ENCODE measurements at regions of chr18 and their contacts with region 1.

Region 1: GRCh38 chr18:51621113-51621863 is 423.8 kb upstream of the MEX3C start:
- DNase-seq: peak; percentile 53
- H3K4me3 ChIP-seq: no peak overlapping the region; a peak in 1 of 4 replicates
- H3K27ac ChIP-seq: no peak overlapping the region
- H3K4me1 ChIP-seq: peaks cover 3 to 8% of the 10 kb centered on the region in 2 experiments; a peak in 2 of 4 replicates
- H3K27me3 ChIP-seq: no peaks in the 10 kb centered on the region
- CTCF ChIP-seq: peak; percentile 84
- EP300 ChIP-seq: no peak
- RAD21 ChIP-seq: peak; percentile 95

Region 2: DNA sequence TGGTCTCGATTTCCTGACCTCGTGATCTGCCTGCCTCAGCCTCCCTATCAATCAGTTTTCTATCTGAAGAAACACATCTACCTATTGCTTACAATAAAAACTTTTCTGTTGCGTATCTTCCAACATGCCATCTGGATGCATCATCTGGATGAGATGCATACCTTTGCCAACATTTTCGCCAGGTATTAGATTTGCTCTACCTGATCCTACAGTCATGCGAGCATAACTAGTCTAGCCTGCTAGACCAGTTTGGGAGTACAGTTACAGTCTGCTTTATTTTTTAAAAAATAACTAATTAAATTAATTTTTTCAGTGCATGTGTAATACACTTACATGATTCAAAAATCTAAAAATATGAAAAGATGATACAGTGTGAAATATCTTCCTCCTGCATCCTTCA is 89.8 kb before region 1 on chr18:
- CTCF ChIA-PET with region 1: no interaction called
- POLR2A ChIA-PET with region 1: no interaction called
- DNase-seq: no peak
- H3K4me3 ChIP-seq: no peak overlapping the region
- H3K27ac ChIP-seq: no peak overlapping the region
- H3K4me1 ChIP-seq: no peaks in the 10 kb centered on the region
- H3K27me3 ChIP-seq: no peaks in the 10 kb centered on the region
- CTCF ChIP-seq: no peak
- EP300 ChIP-seq: no peak
- RAD21 ChIP-seq: no peak

Region 3: DNA sequence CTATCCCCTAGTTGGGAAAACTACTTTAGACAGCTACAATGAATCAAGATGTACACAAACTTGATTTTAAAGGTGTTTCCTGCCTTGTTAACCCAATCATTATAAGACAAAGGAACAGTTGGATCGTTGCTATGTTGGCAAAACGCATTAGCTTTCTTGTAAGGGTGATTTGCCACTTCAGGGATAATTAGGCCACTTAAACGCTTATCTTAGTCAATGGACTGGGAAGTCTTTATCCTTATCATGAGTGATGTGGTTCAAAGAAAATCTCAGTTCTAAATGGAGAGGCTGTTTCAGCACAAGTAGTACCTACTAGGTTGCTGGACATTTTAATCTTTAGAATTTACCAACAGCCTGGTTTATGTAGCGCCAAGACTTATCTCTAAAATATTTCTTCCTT is 17.7 kb before region 1 on chr18:
- CTCF ChIA-PET with region 1: interaction called, 13 read pairs
- POLR2A ChIA-PET with region 1: no interaction called
- DNase-seq: no peak
- H3K4me3 ChIP-seq: no peak overlapping the region
- H3K27ac ChIP-seq: no peak overlapping the region
- H3K4me1 ChIP-seq: no peaks in the 10 kb centered on the region
- H3K27me3 ChIP-seq: no peaks in the 10 kb centered on the region
- CTCF ChIP-seq: no peak
- EP300 ChIP-seq: no peak
- RAD21 ChIP-seq: no peak

Region 4: GRCh38 chr18:51639541-51639940 is 18.3 kb after region 1 on chr18:
- CTCF ChIA-PET with region 1: interaction called, 20 read pairs
- POLR2A ChIA-PET with region 1: no interaction called
- DNase-seq: no peak
- H3K4me3 ChIP-seq: no peak overlapping the region
- H3K27ac ChIP-seq: no peak overlapping the region
- H3K4me1 ChIP-seq: peaks cover 0 to 5% of the 10 kb centered on the region in 2 experiments; a peak in 3 of 4 replicates
- H3K27me3 ChIP-seq: no peaks in the 10 kb centered on the region
- CTCF ChIP-seq: no peak
- EP300 ChIP-seq: no peak
- RAD21 ChIP-seq: no peak

Region 5: DNA sequence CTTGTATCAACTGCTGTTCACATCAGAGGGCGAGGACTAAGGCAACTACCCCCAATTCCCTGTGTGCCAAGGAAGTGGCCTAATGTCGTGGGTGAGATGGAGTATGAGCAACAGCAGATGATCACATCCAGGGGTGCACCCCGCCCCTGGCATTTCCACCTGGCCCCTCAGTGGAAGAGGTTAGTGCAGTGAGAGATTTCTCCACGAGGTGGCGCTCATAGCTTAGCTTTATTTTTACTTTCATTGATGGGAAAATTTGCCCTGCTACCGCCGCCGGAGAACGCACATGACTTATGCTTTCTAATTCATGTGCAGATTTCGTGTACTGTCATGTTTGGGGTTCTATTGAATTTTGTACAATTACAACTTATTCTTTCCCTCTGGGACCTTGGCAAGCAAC is 46.8 kb after region 1 on chr18:
- CTCF ChIA-PET with region 1: interaction called, 34 read pairs
- POLR2A ChIA-PET with region 1: no interaction called
- DNase-seq: peak; percentile 65
- H3K4me3 ChIP-seq: peak overlapping the region in 1 of 2 experiments; percentile 19; a peak in 1 of 4 replicates
- H3K27ac ChIP-seq: no peak overlapping the region
- H3K4me1 ChIP-seq: peaks cover 0 to 17% of the 10 kb centered on the region in 2 experiments; a peak in 2 of 4 replicates
- H3K27me3 ChIP-seq: no peaks in the 10 kb centered on the region
- CTCF ChIP-seq: peak; percentile 86
- EP300 ChIP-seq: no peak
- RAD21 ChIP-seq: peak; percentile 90

Region 6: DNA sequence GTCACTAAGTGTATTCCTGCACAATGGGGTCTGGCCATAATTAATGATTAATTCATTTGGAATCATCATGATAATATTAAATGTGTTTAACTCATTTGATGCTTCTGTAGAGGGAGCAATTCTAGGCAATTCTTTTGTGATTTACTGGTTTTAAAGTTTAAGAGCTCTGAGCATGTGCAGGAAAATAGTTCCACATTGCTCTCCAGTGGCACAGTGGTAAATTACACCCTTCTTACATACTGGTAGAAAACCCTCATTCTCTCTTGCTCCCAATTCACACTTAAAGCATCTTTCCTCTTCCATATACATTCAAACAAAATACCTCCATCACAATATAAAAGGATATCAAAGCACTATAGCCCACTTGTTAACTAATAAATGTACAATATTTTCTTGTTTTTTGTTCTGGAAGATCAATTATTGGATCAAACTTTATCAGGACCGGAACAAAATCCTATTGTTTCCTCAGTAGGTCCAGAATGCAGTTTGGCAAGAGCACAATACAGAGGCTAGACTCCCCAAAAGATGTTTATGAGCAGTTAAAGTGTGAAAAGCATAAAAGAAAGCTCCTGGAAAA is 1758.9 kb after region 1 on chr18:
- CTCF ChIA-PET with region 1: interaction called, 17 read pairs
- POLR2A ChIA-PET with region 1: no interaction called
- DNase-seq: peak; percentile 31
- H3K4me3 ChIP-seq: no peak overlapping the region
- H3K27ac ChIP-seq: no peak overlapping the region
- H3K4me1 ChIP-seq: peaks cover 0 to 9% of the 10 kb centered on the region in 2 experiments; a peak in 2 of 4 replicates
- H3K27me3 ChIP-seq: no peaks in the 10 kb centered on the region
- CTCF ChIP-seq: peak; percentile 25; the same call in 1 of the 2 replicates
- EP300 ChIP-seq: peak in 1 of 2 experiments; percentile 34; a peak in 1 of 4 replicates
- RAD21 ChIP-seq: peak; percentile 87